BJ (cell line): ENCODE measurements at regions of chr12 and their contacts with region 1.

Region 1: GRCh38 chr12:19915392-19916195 is 452.7 kb upstream of the PDE3A start:
- DNase-seq: peak; percentile 9
- H3K4me3 ChIP-seq: no peak overlapping the region
- H3K27me3 ChIP-seq: no peaks in the 10 kb centered on the region
- CTCF ChIP-seq: peak; percentile 60

Region 2: GRCh38 chr12:20194171-20194570 is 278.6 kb after region 1 on chr12:
- CTCF ChIA-PET with region 1: interaction called, 10 read pairs
- POLR2A ChIA-PET with region 1: no interaction called
- DNase-seq: no peak
- H3K4me3 ChIP-seq: no peak overlapping the region
- H3K27me3 ChIP-seq: no peaks in the 10 kb centered on the region
- CTCF ChIP-seq: peak; percentile 55

Region 3: DNA sequence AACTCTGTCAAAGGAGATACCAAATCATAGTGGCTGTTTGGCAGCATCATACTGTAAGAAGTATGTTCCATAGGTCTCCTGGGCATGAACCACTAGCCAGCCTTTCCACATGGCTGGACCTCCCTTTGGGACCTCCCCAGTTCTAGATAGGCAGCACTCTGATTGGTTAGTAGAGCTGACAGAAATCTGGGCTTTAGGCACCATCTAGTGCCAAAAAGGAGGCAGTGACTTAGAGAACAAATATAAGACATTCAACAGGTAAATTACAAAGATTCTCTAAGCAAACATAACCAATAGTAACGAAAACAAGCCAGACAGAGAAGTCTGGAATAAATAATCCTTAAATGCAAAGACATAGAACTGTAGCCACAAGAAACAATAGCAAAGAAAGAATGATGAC is 304.7 kb after region 1 on chr12:
- CTCF ChIA-PET with region 1: interaction called, 10 read pairs
- POLR2A ChIA-PET with region 1: no interaction called
- DNase-seq: no peak
- H3K4me3 ChIP-seq: no peak overlapping the region
- H3K27me3 ChIP-seq: no peaks in the 10 kb centered on the region
- CTCF ChIP-seq: peak; percentile 25; the same call in 1 of the 2 replicates

Region 4: DNA sequence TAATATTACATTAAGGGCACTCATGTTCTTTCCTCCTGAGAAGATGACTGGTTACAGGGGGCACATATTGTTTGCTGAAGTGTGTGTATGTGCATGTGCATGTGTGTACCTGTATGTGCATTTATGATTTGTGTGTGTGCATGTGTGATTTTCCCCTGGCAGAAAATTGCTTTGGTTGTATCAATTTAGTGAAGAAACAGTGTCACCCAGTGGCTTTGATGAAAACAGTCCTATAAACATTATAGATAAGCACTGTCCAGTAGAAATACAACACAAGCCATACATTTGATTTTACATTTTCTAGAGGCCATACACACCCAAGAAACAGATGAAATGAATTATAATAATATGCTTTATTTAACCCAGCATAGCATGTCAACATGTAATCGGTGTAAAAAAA is 461.4 kb after region 1 on chr12:
- CTCF ChIA-PET with region 1: interaction called, 13 read pairs
- POLR2A ChIA-PET with region 1: no interaction called
- DNase-seq: no peak
- H3K4me3 ChIP-seq: no peak overlapping the region
- H3K27me3 ChIP-seq: no peaks in the 10 kb centered on the region
- CTCF ChIP-seq: peak; percentile 33

Region 5: DNA sequence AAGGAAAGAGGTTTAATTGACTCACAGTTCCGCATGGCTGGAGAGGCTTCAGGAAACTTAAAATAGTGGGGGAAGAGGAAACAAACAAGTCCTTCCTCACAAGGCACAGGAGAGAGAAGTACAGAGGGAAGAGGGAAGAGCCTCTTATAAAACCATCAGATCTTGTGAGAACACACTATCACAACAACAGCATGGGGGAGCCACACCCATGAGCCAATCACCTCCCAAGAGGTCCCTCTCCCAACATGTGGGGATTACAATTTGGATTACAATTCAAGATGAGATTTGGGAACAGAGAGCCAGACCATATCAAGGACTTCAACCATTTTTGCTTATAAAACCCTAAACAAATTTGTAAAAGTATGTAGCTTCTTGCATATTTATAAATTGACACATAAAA is 825.4 kb after region 1 on chr12:
- CTCF ChIA-PET with region 1: no interaction called
- POLR2A ChIA-PET with region 1: no interaction called
- DNase-seq: no peak
- H3K4me3 ChIP-seq: no peak overlapping the region
- H3K27me3 ChIP-seq: no peaks in the 10 kb centered on the region
- CTCF ChIP-seq: no peak